Activated naive CD4-positive, alpha-beta T cell treated with anti-CD3 and anti-CD28 coated beads for 36 hours (primary cell): ENCODE measurements at regions of chr5 and their contacts with region 1.

Region 1: DNA sequence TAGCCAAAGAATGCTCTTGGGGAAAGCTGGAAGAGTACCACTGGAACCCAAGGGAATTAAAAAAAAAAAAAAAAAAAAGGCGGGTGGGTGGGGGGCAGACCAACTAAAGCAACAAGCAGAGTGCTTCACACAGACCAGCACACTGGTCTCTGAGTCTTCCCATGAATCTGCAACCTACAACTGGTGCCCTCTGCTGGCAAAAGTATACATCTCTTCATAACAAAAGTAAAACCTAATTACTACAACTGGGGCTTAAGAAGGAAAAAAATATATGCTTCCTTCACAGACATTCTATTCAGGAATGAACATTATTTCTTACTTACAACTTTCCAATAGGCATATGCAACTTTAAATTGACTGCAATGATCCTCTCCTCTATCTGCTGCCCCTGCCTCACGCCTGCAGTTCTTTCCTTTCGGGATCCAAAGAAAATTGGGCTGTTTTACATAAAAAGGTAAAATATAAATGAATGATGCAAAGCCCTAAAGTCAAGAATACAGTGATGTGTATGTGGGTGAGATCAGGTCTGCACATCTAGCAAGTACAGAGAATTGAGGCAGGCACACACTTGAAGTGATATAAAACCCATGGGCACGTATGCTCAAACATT is 7.2 kb upstream of the KLHL3 start:
- DNase-seq: peak; percentile 78
- H3K4me3 Mint-ChIP-seq: no peak overlapping the region
- H3K27ac Mint-ChIP-seq: no peak overlapping the region
- H3K4me1 Mint-ChIP-seq: peaks cover 15% of the 10 kb centered on the region
- H3K27me3 Mint-ChIP-seq: no peaks in the 10 kb centered on the region

Region 2: DNA sequence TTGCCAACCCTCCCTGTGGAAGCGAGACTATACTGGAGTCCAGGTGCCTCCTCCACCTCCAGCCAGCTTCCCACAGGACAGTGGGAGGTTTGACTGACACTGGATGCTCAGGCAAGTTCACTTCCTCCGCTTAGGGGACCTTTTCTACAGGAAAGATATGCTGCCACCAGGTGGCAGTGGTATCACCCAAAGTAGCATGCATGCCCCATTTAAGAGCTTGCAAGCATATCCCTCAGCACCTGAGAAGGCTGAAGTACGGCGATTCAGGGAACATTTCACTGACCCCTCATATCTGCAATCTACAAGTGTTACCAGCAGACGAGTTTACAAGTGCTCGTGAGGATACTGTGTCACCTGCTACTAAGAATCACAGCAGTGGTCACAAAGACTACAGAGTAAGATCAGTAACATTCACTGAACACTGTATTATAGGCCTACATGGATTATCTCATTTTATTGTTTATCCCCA is 82.8 kb before region 1 on chr5:
- CTCF ChIA-PET with region 1: interaction called, 508 read pairs
- intact Hi-C with region 1: loop called (anchors 1 kb)
- DNase-seq: peak; percentile 88
- H3K4me3 Mint-ChIP-seq: no peak overlapping the region
- H3K27ac Mint-ChIP-seq: no peak overlapping the region
- H3K4me1 Mint-ChIP-seq: peaks cover 9% of the 10 kb centered on the region
- H3K27me3 Mint-ChIP-seq: no peaks in the 10 kb centered on the region

Region 3: DNA sequence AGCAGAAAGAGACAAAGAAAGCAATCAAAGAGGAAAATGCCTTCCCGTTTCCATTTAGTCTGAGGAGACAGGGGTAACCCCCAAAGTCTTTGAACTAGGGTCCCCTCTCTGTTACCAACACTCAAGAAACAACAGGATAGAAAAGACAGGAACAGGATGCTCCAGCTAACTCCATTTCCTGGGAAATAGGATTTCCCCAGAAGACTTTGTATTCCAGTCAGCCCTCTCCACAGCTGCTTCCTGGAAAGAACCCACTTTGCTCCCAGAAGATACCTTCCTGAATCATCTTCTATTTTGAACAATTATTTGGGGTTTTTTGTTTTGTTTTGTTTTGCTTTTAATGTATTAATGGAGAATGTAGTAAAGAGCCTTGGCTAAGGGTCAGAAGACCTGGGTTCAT is 63.2 kb before region 1 on chr5:
- CTCF ChIA-PET with region 1: interaction called, 12 read pairs
- intact Hi-C with region 1: no loop called
- DNase-seq: no peak
- H3K4me3 Mint-ChIP-seq: no peak overlapping the region
- H3K27ac Mint-ChIP-seq: no peak overlapping the region
- H3K4me1 Mint-ChIP-seq: no peaks in the 10 kb centered on the region
- H3K27me3 Mint-ChIP-seq: no peaks in the 10 kb centered on the region

Region 4: DNA sequence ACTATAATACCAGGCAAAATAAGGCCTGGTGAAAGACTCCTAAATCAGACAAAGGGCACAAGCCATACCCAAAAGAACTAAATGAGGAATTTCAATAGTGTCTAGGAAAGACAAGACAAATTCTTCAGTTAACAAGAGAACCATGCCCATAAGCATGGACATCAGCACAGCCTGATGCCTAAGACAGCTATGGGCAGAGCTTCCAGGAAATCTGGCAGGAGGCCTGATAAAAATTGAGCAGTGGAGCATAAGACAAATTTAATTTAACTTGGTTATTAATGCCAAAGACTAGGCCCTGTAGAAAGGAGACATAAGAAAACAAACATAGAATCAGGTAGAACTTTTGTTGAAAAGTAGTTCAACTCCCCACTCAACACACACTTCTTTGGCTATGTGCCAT is 24.5 kb before region 1 on chr5:
- CTCF ChIA-PET with region 1: interaction called, 31 read pairs
- intact Hi-C with region 1: no loop called
- DNase-seq: no peak
- H3K4me3 Mint-ChIP-seq: no peak overlapping the region
- H3K27ac Mint-ChIP-seq: no peak overlapping the region
- H3K4me1 Mint-ChIP-seq: peaks cover 9% of the 10 kb centered on the region
- H3K27me3 Mint-ChIP-seq: no peaks in the 10 kb centered on the region